ENCODE measurements at regions of chr14 and their contacts with region 1.

Region 1: DNA sequence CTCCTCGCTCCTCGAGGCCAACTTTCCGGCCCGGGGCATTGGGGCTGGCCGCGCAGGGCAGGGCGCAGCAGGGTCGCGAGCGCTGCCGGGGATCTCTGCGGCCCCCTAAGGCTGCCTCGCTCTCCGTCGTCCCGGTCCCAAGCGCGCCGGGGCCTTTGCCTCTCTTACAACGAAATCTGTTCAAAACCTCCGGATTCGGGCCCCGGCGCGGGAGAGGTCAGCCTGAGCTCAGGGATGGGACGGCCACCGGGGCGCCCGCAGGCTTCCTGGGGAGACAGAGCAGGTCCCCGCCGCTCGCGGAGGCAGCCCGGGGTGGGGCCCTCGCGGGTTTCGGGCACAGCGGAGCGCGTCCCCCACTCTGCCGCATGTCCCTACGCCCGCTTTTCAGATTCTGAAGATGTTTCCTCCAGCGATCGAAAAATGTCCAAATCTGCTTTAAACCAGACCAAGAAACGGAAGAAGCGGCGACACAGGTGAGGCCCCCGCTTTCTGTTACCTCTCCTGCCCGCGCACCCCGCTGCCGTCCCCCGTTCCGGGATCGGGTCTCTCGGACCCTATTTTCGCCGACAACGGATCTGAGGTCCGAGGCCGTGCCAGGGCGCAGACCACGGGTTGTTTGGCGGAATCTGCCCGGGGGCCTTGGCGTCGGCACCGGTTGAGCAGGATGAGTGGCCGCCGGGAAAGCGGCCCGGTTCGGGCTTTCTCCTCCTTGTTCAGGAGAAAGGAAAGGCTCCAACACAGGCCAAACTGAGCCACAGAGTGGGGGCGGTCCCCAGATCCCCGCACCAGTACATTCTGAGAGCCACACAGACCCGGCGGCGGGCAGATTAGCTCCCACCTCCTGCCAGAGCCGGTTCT is 1.8 kb downstream of the VSX2 start:
- DNase-seq: no peak
- H3K4me3 ChIP-seq: no peak overlapping the region
- CTCF ChIP-seq: no peak

Region 2: GRCh38 chr14:74084277-74085046 is 156.6 kb before region 1 on chr14 and contains the starts of genes ALDH6A1 and LIN52:
- in situ Hi-C with region 1: no loop called
- DNase-seq: peak; percentile 100
- H3K4me3 ChIP-seq: peak within 1 kb of the TSS; percentile 74
- CTCF ChIP-seq: no peak

Region 3: DNA sequence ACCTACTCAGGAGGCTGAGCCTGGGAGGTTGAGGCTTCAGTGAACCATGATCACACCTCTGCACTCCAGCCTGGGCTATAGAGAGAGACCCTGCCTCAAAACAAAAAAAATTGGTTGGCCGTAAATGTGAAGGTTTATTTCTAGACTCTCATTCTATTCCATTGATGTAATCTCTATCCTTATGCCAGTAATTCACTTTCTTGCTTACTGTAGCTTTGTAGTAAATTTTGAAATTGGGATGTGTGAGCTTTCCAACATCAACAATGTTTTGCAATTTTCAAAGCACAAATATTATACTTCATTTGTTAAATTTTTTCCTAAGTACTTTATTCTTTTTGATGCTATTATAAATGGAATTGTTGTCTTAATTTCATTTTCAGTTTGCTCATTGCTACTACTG is 131.7 kb before region 1 on chr14:
- in situ Hi-C with region 1: loop called (anchors 25 kb)
- DNase-seq: no peak
- H3K4me3 ChIP-seq: no peak overlapping the region
- CTCF ChIP-seq: no peak

Region 4: GRCh38 chr14:74579447-74580274 is 338.6 kb after region 1 on chr14:
- in situ Hi-C with region 1: no loop called
- DNase-seq: peak; percentile 81
- H3K4me3 ChIP-seq: no peak overlapping the region
- CTCF ChIP-seq: no peak